Sigmoid colon (tissue), 7 donors: ENCODE measurements at regions of chr22 and their contacts with region 1.

Region 1: GRCh38 chr22:48492366-48493320 is 1335.0 kb downstream of the BRD1 start:
- DNase-seq: peak; percentile 76
- H3K4me3 ChIP-seq: no peak overlapping the region
- H3K27ac ChIP-seq: no peak overlapping the region
- H3K4me1 ChIP-seq: peaks cover 0 to 19% (median 16%) of the 10 kb centered on the region in 4 donors
- H3K27me3 ChIP-seq: peaks cover 18 to 36% (median 34%) of the 10 kb centered on the region in 3 donors
- CTCF ChIP-seq: peak in 3 of 4 experiments; percentile 71 to 78 (median 77)
- EP300 ChIP-seq: no peak
- POLR2A ChIP-seq: no peak

Region 2: GRCh38 chr22:46798366-46799350 is 1694.0 kb before region 1 on chr22:
- intact Hi-C with region 1: loop called (anchors 5 kb)
- DNase-seq: peak; percentile 77
- H3K4me3 ChIP-seq: no peak overlapping the region
- H3K27ac ChIP-seq: no peak overlapping the region
- H3K4me1 ChIP-seq: peaks cover 0 to 12% (median 6%) of the 10 kb centered on the region in 4 donors
- H3K27me3 ChIP-seq: no peaks in the 10 kb centered on the region
- CTCF ChIP-seq: peak; percentile 66 to 96 (median 90)
- EP300 ChIP-seq: no peak
- POLR2A ChIP-seq: no peak

Region 3: GRCh38 chr22:46843821-46844255 is 1648.8 kb before region 1 on chr22:
- intact Hi-C with region 1: loop called (anchors 5 kb)
- DNase-seq: no peak
- H3K4me3 ChIP-seq: no peak overlapping the region
- H3K27ac ChIP-seq: no peak overlapping the region
- H3K4me1 ChIP-seq: peaks cover 0 to 25% (median 8%) of the 10 kb centered on the region in 4 donors
- H3K27me3 ChIP-seq: no peaks in the 10 kb centered on the region
- CTCF ChIP-seq: no peak
- EP300 ChIP-seq: no peak
- POLR2A ChIP-seq: no peak

Region 4: GRCh38 chr22:48320683-48321451 is 171.8 kb before region 1 on chr22:
- intact Hi-C with region 1: no loop called
- DNase-seq: peak; percentile 59
- H3K4me3 ChIP-seq: no peak overlapping the region
- H3K27ac ChIP-seq: peak overlapping the region in 1 of 4 donors; percentile 8
- H3K4me1 ChIP-seq: peaks cover 0 to 16% (median 9%) of the 10 kb centered on the region in 4 donors
- H3K27me3 ChIP-seq: no peaks in the 10 kb centered on the region
- CTCF ChIP-seq: no peak
- EP300 ChIP-seq: no peak
- POLR2A ChIP-seq: no peak